ENCODE measurements at regions of chr1 and their contacts with region 1.

Region 1: GRCh38 chr1:225923692-225924555 is at the start of gene PYCR2:
- DNase-seq: peak; percentile 91 to 96 (median 94)
- H3K4me3 ChIP-seq: peak within 1 kb of the TSS; percentile 99
- H3K4me3 Mint-ChIP-seq: peak within 1 kb of the TSS; percentile 92 to 99 (median 95)
- H3K27ac ChIP-seq: peak within 1 kb of the TSS; percentile 96
- H3K27ac Mint-ChIP-seq: peak within 1 kb of the TSS; percentile 76 to 98 (median 94)
- H3K4me1 ChIP-seq: peaks cover 61% of the 10 kb centered on the region
- H3K4me1 Mint-ChIP-seq: peaks cover 30 to 55% (median 40%) of the 10 kb centered on the region in 3 donors
- H3K27me3 ChIP-seq: no peaks in the 10 kb centered on the region
- H3K27me3 Mint-ChIP-seq: no peaks in the 10 kb centered on the region
- total RNA-seq, gene PYCR2: 130 to 131 TPM

Region 2: GRCh38 chr1:225896937-225897549 is 26.9 kb before region 1 on chr1:
- CTCF ChIA-PET with region 1: no interaction called
- POLR2A ChIA-PET with region 1: interaction called, 15 read pairs
- DNase-seq: peak; percentile 46 to 89 (median 85)
- H3K4me3 ChIP-seq: peak overlapping the region; percentile 48
- H3K4me3 Mint-ChIP-seq: peak overlapping the region; percentile 28 to 84 (median 82)
- H3K27ac ChIP-seq: peak overlapping the region; percentile 45
- H3K27ac Mint-ChIP-seq: peak overlapping the region; percentile 90 to 98 (median 95)
- H3K4me1 ChIP-seq: peaks cover 44% of the 10 kb centered on the region
- H3K4me1 Mint-ChIP-seq: peaks cover 45 to 62% (median 53%) of the 10 kb centered on the region in 3 donors
- H3K27me3 ChIP-seq: no peaks in the 10 kb centered on the region
- H3K27me3 Mint-ChIP-seq: no peaks in the 10 kb centered on the region